HEK293 (cell line): ENCODE measurements at regions of chr6 and their contacts with region 1.

Region 1: GRCh38 chr6:117976030-117976651 is 69.1 kb downstream of the SLC35F1 start:
- H3K4me3 ChIP-seq: no peak overlapping the region
- H3K27ac ChIP-seq: no peak overlapping the region
- H3K4me1 ChIP-seq: no peaks in the 10 kb centered on the region
- CTCF ChIP-seq: 0 out of 2 replicates have a peak, but pooled peaks have one; percentile 38

Region 2: DNA sequence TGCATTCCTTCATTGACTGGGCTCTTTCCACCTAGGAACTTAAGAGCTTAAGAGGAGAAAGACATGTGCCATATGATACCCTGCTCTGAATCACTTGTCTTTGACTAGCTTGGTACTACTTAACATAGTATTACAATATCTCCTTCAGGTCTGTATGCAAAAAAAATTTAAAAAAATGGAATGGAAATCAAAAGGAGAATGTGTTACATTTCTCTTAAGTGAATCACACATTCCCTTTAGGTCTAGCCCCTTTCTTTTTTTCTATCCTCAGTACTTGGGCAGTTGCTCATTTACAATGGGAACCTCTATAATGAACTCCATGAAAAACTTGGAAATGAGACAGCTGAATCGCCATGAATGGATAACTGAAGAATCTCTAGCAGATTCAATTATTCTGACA is 15.3 kb before region 1 on chr6:
- CTCF ChIA-PET with region 1: interaction called, 13 read pairs
- POLR2A ChIA-PET with region 1: no interaction called
- H3K4me3 ChIP-seq: no peak overlapping the region
- H3K27ac ChIP-seq: no peak overlapping the region
- H3K4me1 ChIP-seq: no peaks in the 10 kb centered on the region
- CTCF ChIP-seq: no peak

Region 3: DNA sequence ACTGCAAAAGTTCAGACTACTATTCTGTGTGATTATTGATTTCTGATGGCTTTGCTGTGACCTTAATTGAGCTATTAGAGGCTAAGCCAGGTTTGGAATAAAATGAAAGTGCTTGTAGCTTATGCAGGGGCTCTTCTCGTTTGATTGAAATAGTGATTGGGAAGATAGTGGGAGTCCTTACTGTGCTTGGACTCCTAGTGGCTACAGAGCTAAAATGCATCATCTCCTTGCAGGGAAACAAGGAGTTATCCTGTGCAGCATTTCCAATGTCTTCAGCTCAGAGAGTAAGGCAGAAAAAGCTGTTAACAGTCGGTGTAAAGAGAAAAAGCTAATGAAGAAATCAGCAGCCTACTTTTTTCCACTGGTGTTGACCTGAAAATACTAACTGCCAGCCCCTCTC is 104.4 kb after region 1 on chr6:
- CTCF ChIA-PET with region 1: interaction called, 14 read pairs
- POLR2A ChIA-PET with region 1: no interaction called
- H3K4me3 ChIP-seq: no peak overlapping the region
- H3K27ac ChIP-seq: no peak overlapping the region
- H3K4me1 ChIP-seq: no peaks in the 10 kb centered on the region
- CTCF ChIP-seq: no peak

Region 4: DNA sequence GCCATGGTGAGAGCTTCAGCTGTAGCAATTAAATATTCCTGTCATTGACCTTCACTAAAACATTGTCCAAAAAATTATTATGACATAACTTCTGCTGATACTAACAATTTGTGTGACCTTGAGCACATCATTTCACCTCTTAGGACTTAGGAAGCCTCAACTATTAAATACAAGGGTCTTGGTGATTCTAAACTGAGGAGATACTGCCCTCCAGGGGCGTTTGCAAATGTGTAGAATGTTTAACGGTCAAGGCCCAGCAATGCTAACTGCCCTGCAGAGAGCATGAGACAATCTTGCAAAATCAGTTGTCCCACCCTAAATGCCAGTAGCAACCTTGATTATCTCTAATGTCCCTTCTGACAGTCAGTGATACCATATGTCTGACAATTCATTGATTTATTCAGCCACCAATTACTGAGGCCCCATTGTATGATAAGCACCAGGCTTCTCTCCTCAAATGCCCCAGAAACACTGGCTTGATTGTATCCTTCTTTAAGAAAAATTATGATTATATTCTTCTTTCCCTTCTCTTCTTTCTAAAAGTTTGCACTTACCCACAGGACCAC is 287.9 kb after region 1 on chr6:
- CTCF ChIA-PET with region 1: interaction called, 35 read pairs
- POLR2A ChIA-PET with region 1: no interaction called
- H3K4me3 ChIP-seq: no peak overlapping the region
- H3K27ac ChIP-seq: no peak overlapping the region
- H3K4me1 ChIP-seq: no peaks in the 10 kb centered on the region
- CTCF ChIP-seq: no peak